BJ (cell line): ENCODE measurements at regions of chr7 and their contacts with region 1.

Region 1: GRCh38 chr7:121372376-121373010 is 23.6 kb downstream of the FAM3C start:
- DNase-seq: no peak
- H3K4me3 ChIP-seq: no peak overlapping the region
- H3K27me3 ChIP-seq: no peaks in the 10 kb centered on the region
- CTCF ChIP-seq: no peak

Region 2: DNA sequence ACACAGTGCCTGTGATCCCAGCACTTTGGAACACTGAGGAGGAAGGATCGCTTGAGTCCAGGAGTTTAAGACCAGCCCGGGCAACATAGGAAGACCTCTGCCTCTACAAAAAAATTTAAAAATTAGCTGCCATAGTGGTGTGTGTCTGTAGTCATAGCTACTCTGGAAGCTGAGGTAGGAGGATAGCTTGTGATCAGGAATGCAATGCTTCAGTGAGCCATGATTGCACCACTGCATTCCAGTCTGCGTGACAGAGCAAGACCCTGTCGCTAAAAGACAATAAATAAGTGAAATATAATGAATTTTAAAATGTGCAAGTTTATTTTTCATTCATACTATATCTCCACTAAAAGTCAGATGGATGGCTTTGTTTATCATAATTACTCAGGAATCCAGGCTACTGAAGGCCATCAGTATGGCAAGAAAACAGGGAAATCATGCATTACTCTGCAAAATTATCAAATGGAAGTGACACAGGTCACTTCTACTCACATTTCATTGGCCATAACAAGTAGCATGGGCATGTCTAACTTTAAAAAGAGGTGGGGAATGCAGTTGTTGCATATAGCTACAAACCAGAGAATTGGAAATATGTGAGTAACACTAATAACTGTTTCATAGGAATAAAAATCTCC is 56.5 kb after region 1 on chr7:
- CTCF ChIA-PET with region 1: no interaction called
- POLR2A ChIA-PET with region 1: interaction called, 10 read pairs
- DNase-seq: no peak
- H3K4me3 ChIP-seq: no peak overlapping the region
- H3K27me3 ChIP-seq: no peaks in the 10 kb centered on the region; the same call in 1 of the 2 replicates
- CTCF ChIP-seq: no peak

Region 3: GRCh38 chr7:121547544-121548092 is 175.1 kb after region 1 on chr7:
- CTCF ChIA-PET with region 1: interaction called, 57 read pairs
- POLR2A ChIA-PET with region 1: no interaction called
- DNase-seq: no peak
- H3K4me3 ChIP-seq: no peak overlapping the region
- H3K27me3 ChIP-seq: no peaks in the 10 kb centered on the region
- CTCF ChIP-seq: peak; percentile 68